Adrenal gland (tissue), 19 donors: ENCODE measurements at regions of chr17 and their contacts with region 1.

Region 1: GRCh38 chr17:27489045-27489715 is 32.9 kb downstream of the KSR1 start:
- DNase-seq: peak; percentile 40 to 76 (median 73)
- H3K4me3 ChIP-seq: no peak overlapping the region
- H3K27ac ChIP-seq: peak overlapping the region in 2 of 5 donors; percentile 18 to 54
- H3K4me1 ChIP-seq: peaks cover 23 to 60% of the 10 kb centered on the region in 2 donors
- H3K27me3 ChIP-seq: no peaks in the 10 kb centered on the region
- CTCF ChIP-seq: no peak
- POLR2A ChIP-seq: no peak

Region 2: DNA sequence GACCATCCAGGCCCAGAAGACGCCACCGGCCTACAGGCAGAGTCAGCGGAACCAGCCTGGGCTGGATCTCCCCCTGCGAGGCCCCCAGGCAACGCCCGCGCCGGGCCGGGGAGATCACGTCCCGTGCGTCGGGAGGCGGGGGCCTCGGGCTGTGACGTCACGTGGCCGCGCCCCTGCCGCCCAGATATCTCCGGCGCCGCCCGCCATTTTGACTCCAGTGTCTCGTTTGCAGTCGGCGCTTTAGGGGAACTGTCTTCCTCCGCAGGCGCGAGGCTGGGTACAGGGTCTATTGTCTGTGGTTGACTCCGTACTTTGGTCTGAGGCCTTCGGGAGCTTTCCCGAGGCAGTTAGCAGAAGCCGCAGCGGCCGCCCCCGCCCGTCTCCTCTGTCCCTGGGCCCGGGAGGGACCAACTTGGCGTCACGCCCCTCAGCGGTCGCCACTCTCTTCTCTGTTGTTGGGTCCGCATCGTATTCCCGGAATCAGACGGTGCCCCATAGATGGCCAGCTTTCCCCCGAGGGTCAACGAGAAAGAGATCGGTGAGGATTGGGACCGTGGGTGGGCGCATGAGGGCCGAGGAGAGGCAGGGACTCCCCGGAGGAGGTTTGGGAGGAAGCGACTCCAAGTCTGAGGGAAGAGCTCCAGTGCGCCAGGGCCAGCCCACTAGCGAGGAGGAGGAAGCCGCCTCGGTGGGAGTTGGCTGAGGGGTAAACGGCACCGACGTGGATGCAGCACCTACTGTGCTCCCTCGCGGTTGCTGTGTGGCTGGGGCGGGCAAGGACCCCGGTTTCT is 195.1 kb before region 1 on chr17 and contains the start of gene WSB1:
- intact Hi-C with region 1: no loop called
- DNase-seq: peak; percentile 91 to 97 (median 94)
- H3K4me3 ChIP-seq: peak within 1 kb of the TSS; percentile 84 to 99 (median 92)
- H3K27ac ChIP-seq: peak within 1 kb of the TSS; percentile 98 to 100 (median 100)
- H3K4me1 ChIP-seq: peaks cover 9 to 39% of the 10 kb centered on the region in 2 donors
- H3K27me3 ChIP-seq: no peaks in the 10 kb centered on the region
- CTCF ChIP-seq: peak in 4 of 6 experiments; percentile 6 to 9 (median 7)
- POLR2A ChIP-seq: peak; percentile 96 to 99
- total RNA-seq, gene WSB1: 27.5 to 170 (median 113) TPM

Region 3: DNA sequence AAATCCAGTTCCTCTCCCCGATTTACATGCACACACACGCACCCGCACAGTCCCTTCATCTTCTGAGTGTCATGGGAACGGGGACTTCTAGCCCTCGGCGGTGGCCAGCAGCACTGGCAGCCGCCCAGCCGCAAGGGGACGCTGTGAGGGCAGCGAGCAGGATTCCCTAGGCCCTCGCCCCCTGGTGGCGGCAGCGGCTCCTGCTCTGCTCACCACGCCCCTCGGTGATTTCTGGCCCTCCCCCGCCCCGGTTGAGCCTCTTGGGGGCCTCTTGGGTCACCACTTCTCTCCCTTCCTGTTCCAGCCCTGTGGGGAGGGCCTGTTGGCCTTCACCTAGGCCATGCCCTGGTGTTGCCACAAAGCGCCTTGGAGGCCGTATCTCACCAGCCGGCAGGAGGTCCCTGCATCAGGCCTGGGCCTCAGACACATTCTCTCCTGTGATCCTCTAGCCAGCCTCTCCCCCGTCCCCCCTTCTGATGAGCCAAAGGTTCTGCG is 108.1 kb before region 1 on chr17:
- intact Hi-C with region 1: no loop called
- DNase-seq: peak; percentile 61 to 89 (median 79)
- H3K4me3 ChIP-seq: no peak overlapping the region
- H3K27ac ChIP-seq: no peak overlapping the region
- H3K4me1 ChIP-seq: peaks cover 8 to 13% of the 10 kb centered on the region in 2 donors
- H3K27me3 ChIP-seq: no peaks in the 10 kb centered on the region
- CTCF ChIP-seq: peak; percentile 83 to 98 (median 92)
- POLR2A ChIP-seq: no peak

Region 4: GRCh38 chr17:27532269-27533263 is 43.4 kb after region 1 on chr17:
- intact Hi-C with region 1: loop called in 1 of 2 experiments (anchors 5 kb)
- DNase-seq: peak in 4 of 7 donors; percentile 54 to 67 (median 56)
- H3K4me3 ChIP-seq: no peak overlapping the region
- H3K27ac ChIP-seq: peak overlapping the region in 1 of 5 donors; percentile 74
- H3K4me1 ChIP-seq: peaks cover 0 to 49% of the 10 kb centered on the region in 2 donors
- H3K27me3 ChIP-seq: no peaks in the 10 kb centered on the region
- CTCF ChIP-seq: no peak
- POLR2A ChIP-seq: no peak

Region 5: GRCh38 chr17:27622986-27623385 is 133.8 kb after region 1 on chr17:
- intact Hi-C with region 1: no loop called
- DNase-seq: peak in 2 of 7 donors; percentile 43 to 56
- H3K4me3 ChIP-seq: no peak overlapping the region
- H3K27ac ChIP-seq: no peak overlapping the region
- H3K4me1 ChIP-seq: no peaks in the 10 kb centered on the region
- H3K27me3 ChIP-seq: no peaks in the 10 kb centered on the region
- CTCF ChIP-seq: no peak
- POLR2A ChIP-seq: no peak